Endothelial cell of umbilical vein (primary cell): ENCODE measurements at regions of chr1 and their contacts with region 1.

Region 1: GRCh38 chr1:7549277-7550161 is 221.6 kb upstream of the VAMP3 start:
- DNase-seq: peak; percentile 84
- H3K4me3 ChIP-seq: peak overlapping the region in 1 of 3 experiments; percentile 13
- H3K27ac ChIP-seq: peak overlapping the region; percentile 94
- H3K4me1 ChIP-seq: peaks cover 28% of the 10 kb centered on the region
- H3K27me3 ChIP-seq: no peaks in the 10 kb centered on the region
- CTCF ChIP-seq: no peak
- POLR2A ChIP-seq: no peak

Region 2: DNA sequence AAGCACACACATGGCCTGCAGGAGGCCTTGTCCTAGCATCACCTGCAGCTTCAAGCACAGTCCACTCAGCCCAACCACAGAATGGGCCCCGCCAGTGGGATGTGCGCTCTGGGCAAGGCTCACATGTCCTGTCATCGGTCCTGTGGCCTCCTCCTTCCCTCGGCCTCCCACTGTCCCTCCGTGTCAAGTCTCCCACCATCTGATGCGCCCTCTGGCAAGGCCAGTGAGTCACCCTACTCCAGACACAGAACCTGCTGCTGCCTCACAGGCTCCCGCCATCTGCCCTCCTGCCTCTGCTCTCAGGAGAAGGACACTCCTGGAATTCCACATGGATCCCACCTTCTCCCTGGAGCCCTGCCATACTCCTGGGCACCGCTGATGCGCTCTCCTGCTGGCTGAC is 1489.7 kb before region 1 on chr1:
- CTCF ChIA-PET with region 1: no interaction called
- POLR2A ChIA-PET with region 1: no interaction called
- dilution Hi-C with region 1: no loop called
- intact Hi-C with region 1: no loop called
- DNase-seq: no peak
- H3K4me3 ChIP-seq: no peak overlapping the region
- H3K27ac ChIP-seq: no peak overlapping the region
- H3K4me1 ChIP-seq: peaks cover 10% of the 10 kb centered on the region
- H3K27me3 ChIP-seq: no peaks in the 10 kb centered on the region
- CTCF ChIP-seq: no peak
- POLR2A ChIP-seq: no peak

Region 3: DNA sequence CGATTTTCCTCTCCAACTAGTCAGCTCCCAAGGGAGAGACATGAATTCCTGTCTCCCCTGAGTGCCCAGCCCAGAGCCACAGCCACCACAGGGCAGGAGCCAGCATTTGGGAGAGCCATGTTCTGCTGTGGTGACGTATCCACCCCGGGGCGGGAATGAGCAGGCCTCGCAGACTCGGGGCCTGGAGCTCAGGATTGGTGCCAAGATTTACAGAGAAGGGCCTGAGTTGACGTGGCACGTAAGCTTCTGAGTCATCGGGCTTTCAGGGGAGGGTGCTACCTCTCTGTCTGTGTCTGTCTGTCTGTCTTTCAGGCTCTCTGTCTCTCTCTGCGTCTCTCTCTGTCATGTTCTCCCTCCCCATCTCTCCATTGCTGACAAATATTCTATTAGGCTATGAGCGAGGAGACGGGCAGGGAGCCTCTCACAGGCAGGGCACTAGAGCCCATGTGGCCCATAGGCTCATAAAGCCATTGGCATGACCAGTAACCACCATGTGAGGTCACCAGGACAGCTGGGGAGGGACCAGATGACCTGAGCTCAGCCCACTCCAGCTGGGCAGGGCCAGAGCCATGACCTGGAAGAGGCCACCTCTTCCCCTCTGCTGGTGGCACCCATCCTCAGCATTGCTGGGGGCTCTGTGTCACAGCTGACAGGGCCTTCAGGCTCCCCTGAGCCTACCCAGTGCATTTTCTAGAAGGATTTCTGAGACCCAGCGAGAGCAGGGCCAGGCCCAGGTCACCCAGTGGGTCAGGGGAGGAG is 78.5 kb before region 1 on chr1:
- CTCF ChIA-PET with region 1: no interaction called
- POLR2A ChIA-PET with region 1: no interaction called
- dilution Hi-C with region 1: no loop called
- intact Hi-C with region 1: loop called (anchors 1 kb)
- DNase-seq: peak; percentile 90
- H3K4me3 ChIP-seq: no peak overlapping the region
- H3K27ac ChIP-seq: peak overlapping the region; percentile 53
- H3K4me1 ChIP-seq: peaks cover 14% of the 10 kb centered on the region
- H3K27me3 ChIP-seq: no peaks in the 10 kb centered on the region
- CTCF ChIP-seq: no peak
- POLR2A ChIP-seq: no peak